CD4-positive, alpha-beta memory T cell (primary cell): ENCODE measurements at regions of chr3 and their contacts with region 1.

Region 1: GRCh38 chr3:186783073-186783730 is at the start of gene EIF4A2:
- DNase-seq: peak; percentile 91 to 93 (median 93)
- H3K4me3 ChIP-seq: peak within 1 kb of the TSS; percentile 86 to 97
- H3K4me3 Mint-ChIP-seq: peak within 1 kb of the TSS; percentile 95 to 100 (median 100)
- H3K27ac ChIP-seq: peak within 1 kb of the TSS; percentile 98
- H3K27ac Mint-ChIP-seq: peak within 1 kb of the TSS; percentile 97 to 100 (median 100)
- H3K4me1 ChIP-seq: peaks cover 38% of the 10 kb centered on the region
- H3K4me1 Mint-ChIP-seq: peaks cover 39 to 63% (median 46%) of the 10 kb centered on the region in 4 donors
- H3K27me3 ChIP-seq: no peaks in the 10 kb centered on the region
- H3K27me3 Mint-ChIP-seq: peaks cover 0 to 1% of the 10 kb centered on the region in 2 donors
- total RNA-seq, gene EIF4A2: 589 to 632 TPM

Region 2: DNA sequence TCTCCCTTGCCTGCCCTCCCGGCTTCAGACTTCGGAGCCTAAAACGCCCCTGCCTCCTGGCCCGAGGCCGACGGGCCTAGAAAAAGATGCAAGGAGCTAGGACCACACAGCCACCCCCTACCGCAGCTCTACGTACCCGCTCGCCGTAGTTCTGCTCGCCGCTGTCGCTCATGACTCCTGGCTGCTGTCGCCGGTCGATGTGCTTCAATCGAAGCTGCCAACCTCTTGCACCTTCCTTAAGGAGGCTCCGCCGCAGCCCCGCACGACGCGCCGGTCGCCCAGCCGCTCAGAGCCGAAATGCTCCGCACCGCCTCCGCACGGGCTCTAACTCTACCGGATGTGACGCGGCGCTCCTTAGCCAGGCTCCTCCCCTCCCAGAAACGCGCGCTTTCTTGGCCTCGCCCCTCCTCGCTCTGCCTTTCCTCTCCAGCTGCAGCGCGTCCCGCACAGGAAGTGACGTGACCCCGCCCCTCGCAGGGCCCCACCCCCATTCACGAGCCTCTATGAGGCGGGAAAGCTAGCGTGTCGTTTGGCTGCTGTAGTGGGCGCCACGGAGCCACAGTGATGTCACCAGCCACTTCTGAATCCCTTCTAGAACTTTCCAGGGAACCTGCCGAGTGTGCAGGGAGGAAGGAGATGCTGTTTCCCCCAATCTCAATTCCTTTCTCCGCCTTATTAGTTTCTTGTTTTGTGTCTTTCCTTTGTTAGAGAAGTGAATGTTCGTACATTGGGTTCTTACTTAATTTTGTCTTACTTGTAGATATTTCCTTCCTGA is 845.3 kb before region 1 on chr3 and contains the start of gene TRA2B:
- CTCF ChIA-PET with region 1: no interaction called
- POLR2A ChIA-PET with region 1: interaction called, 68 read pairs
- intact Hi-C with region 1: loop called (anchors 2 kb)
- DNase-seq: peak; percentile 97 to 99 (median 99)
- H3K4me3 ChIP-seq: peak within 1 kb of the TSS; percentile 98
- H3K4me3 Mint-ChIP-seq: peak within 1 kb of the TSS; percentile 98 to 100 (median 100)
- H3K27ac ChIP-seq: peak within 1 kb of the TSS; percentile 99
- H3K27ac Mint-ChIP-seq: peak within 1 kb of the TSS; percentile 100
- H3K4me1 ChIP-seq: peaks cover 32% of the 10 kb centered on the region
- H3K4me1 Mint-ChIP-seq: peaks cover 26 to 62% (median 35%) of the 10 kb centered on the region in 4 donors
- H3K27me3 ChIP-seq: no peaks in the 10 kb centered on the region
- H3K27me3 Mint-ChIP-seq: no peaks in the 10 kb centered on the region
- total RNA-seq, gene TRA2B: 179 to 181 TPM

Region 3: GRCh38 chr3:186772701-186773424 is 10.3 kb before region 1 on chr3:
- CTCF ChIA-PET with region 1: interaction called, 14 read pairs
- POLR2A ChIA-PET with region 1: interaction called, 311 read pairs
- intact Hi-C with region 1: loop called (anchors 1 kb)
- DNase-seq: peak; percentile 46 to 63 (median 49)
- H3K4me3 ChIP-seq: peak overlapping the region; percentile 37 to 72
- H3K4me3 Mint-ChIP-seq: peak overlapping the region; percentile 88 to 99 (median 96)
- H3K27ac ChIP-seq: peak overlapping the region; percentile 61
- H3K27ac Mint-ChIP-seq: peak overlapping the region; percentile 81 to 95 (median 95)
- H3K4me1 ChIP-seq: peaks cover 12% of the 10 kb centered on the region
- H3K4me1 Mint-ChIP-seq: peaks cover 0 to 18% (median 13%) of the 10 kb centered on the region in 4 donors
- H3K27me3 ChIP-seq: no peaks in the 10 kb centered on the region
- H3K27me3 Mint-ChIP-seq: no peaks in the 10 kb centered on the region

Region 4: DNA sequence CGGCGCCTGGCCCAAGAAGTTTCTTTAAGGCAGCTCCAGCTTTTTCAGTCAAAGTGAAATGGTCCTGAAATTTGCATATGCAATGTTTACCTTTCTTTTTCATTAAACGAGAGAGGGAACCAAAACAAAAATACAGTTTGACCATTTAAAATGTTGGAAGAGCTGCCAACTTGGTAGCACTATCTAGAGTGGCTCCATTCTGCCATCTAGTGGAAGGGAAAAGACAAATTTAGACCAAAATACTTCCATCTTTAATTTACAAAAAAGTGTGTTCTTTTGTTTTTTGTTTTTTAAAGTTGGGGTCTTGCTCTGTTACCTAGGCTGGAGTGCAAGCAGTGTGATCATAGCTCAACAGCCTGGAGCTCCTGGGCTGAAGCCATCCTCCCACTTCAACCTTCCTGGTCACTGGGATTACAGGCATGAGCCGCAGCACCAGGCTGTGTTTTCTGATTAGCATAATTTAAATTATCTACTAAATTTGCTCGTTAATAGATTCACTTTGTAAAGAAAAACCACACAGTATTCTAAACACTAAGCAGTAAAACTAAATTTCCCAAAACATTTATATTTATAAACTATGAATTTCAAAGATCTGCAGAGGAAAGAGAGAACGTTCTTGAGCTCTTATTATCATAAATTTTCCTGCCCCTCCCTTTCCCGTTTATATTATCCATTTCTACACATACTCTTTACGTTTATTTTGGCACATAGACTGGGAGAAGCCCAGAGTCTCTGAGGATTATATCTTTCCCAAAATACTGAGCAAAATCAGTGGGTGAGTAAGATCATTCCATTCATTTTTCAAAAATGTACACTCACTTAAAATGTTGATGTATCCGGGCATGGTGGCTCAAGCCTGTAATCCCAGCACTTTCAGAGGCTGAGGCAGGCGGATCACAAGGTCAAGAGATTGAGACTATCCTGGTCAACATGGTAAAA is 38.5 kb after region 1 on chr3:
- CTCF ChIA-PET with region 1: interaction called, 8 read pairs
- POLR2A ChIA-PET with region 1: interaction called, 71 read pairs
- intact Hi-C with region 1: no loop called
- DNase-seq: peak in 4 of 5 donors; percentile 42 to 56 (median 46)
- H3K4me3 ChIP-seq: no peak overlapping the region
- H3K4me3 Mint-ChIP-seq: no peak overlapping the region
- H3K27ac ChIP-seq: no peak overlapping the region
- H3K27ac Mint-ChIP-seq: peak overlapping the region in 1 of 7 donors; percentile 4
- H3K4me1 ChIP-seq: peaks cover 13% of the 10 kb centered on the region
- H3K4me1 Mint-ChIP-seq: peaks cover 5 to 15% (median 11%) of the 10 kb centered on the region in 4 donors
- H3K27me3 ChIP-seq: no peaks in the 10 kb centered on the region
- H3K27me3 Mint-ChIP-seq: peaks cover 3 to 8% of the 10 kb centered on the region in 2 donors

Region 5: GRCh38 chr3:186915806-186916796 is 132.9 kb after region 1 on chr3:
- CTCF ChIA-PET with region 1: no interaction called
- POLR2A ChIA-PET with region 1: interaction called, 12 read pairs
- intact Hi-C with region 1: no loop called
- DNase-seq: peak in 1 of 5 donors; percentile 11
- H3K4me3 ChIP-seq: no peak overlapping the region
- H3K4me3 Mint-ChIP-seq: peak overlapping the region in 7 of 8 donors; percentile 3 to 86 (median 50)
- H3K27ac ChIP-seq: no peak overlapping the region
- H3K27ac Mint-ChIP-seq: peak overlapping the region in 5 of 7 donors; percentile 20 to 84 (median 66)
- H3K4me1 ChIP-seq: peaks cover 28% of the 10 kb centered on the region
- H3K4me1 Mint-ChIP-seq: peaks cover 24 to 53% (median 35%) of the 10 kb centered on the region in 4 donors
- H3K27me3 ChIP-seq: no peaks in the 10 kb centered on the region
- H3K27me3 Mint-ChIP-seq: no peaks in the 10 kb centered on the region

Region 6: DNA sequence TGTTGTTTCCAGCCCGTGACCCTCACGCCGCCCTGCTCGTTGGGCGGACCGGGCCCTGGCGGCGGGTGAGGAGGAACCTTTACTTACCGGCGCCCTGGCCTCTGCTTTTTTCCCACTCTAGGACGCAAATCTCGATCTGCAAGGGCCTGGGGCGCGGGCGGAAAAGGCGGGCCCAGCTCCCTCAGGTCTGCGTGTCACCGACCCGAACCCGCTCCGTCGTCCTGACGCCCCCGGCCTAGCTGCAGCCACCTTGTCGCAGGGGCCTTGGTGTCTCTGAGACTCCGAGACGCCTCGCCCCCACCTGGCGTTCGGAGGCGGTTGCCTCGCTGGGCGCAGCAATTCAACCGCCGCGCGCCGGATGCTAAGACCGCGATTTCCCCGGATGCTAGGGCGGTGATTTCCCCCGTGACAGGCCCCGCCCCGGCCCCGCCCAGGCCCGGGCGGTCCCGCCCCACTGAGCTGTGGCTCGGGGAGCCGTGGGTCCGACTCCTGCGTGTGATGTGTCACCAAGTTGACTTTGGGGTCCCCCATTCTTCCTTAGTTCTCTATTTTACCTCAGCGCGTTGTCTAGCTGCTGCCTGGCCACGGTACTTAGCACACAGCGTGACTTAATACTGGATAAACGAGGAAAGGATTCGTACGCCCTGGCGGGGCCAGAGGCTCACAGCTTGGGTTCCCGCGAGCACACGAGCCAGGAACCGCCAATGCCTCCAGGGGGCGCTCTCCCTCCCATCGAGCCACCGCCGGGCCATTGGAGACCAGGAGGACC is 356.1 kb after region 1 on chr3 and contains the start of gene RPL39L:
- CTCF ChIA-PET with region 1: no interaction called
- POLR2A ChIA-PET with region 1: interaction called, 26 read pairs
- intact Hi-C with region 1: loop called (anchors 5 kb)
- DNase-seq: peak; percentile 91 to 93 (median 92)
- H3K4me3 ChIP-seq: peak within 1 kb of the TSS; percentile 24 to 86
- H3K4me3 Mint-ChIP-seq: peak within 1 kb of the TSS; percentile 82 to 94 (median 91)
- H3K27ac ChIP-seq: peak within 1 kb of the TSS; percentile 74
- H3K27ac Mint-ChIP-seq: peak within 1 kb of the TSS; percentile 87 to 97 (median 95)
- H3K4me1 ChIP-seq: peaks cover 17% of the 10 kb centered on the region
- H3K4me1 Mint-ChIP-seq: peaks cover 9 to 34% (median 18%) of the 10 kb centered on the region in 4 donors
- H3K27me3 ChIP-seq: no peaks in the 10 kb centered on the region
- H3K27me3 Mint-ChIP-seq: no peaks in the 10 kb centered on the region
- total RNA-seq, gene RPL39L: 2.6 to 3.6 TPM